K562 (cell line): ENCODE measurements at regions of chr1 and their contacts with region 1.

Region 1: GRCh38 chr1:55064071-55064581 is 24.8 kb downstream of the PCSK9 start:
- DNase-seq: no peak
- ATAC-seq: peak; percentile 16; the same call in 2 of the 3 replicates
- H3K4me3 ChIP-seq: no peak overlapping the region
- H3K27ac ChIP-seq: no peak overlapping the region
- H3K4me1 ChIP-seq: peaks cover 0 to 8% of the 10 kb centered on the region in 2 experiments; a peak in 2 of 5 replicates
- H3K27me3 ChIP-seq: no peaks in the 10 kb centered on the region
- CTCF ChIP-seq: no peak
- EP300 ChIP-seq: no peak
- POLR2A ChIP-seq: peak; percentile 10; the same call in 1 of the 2 replicates
- RAD21 ChIP-seq: no peak

Region 2: DNA sequence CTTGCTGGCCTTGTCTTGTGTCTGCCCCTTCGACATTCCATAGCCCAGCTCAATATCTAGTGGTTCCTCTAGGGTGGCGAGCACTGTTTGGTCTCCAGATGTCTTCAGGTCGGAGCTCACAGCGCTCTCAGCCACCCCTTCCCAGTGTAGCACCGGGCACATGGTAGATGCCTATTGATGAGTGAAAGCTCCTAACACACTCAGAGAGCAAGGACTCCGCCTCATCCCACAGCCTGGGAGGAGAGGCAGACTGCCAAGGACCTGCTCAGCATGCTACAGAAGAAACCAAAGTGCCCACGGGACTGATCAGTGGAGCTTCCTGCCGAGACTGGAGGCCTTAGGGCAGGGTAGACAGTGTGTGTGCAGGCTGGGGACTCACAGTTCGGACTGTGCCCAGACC is 13.8 kb before region 1 on chr1:
- CTCF ChIA-PET with region 1: no interaction called
- POLR2A ChIA-PET with region 1: interaction called, 24 read pairs
- in situ Hi-C with region 1: no loop called
- intact Hi-C with region 1: no loop called
- DNase-seq: no peak
- ATAC-seq: no peak
- H3K4me3 ChIP-seq: no peak overlapping the region
- H3K27ac ChIP-seq: no peak overlapping the region
- H3K4me1 ChIP-seq: peaks cover 0 to 5% of the 10 kb centered on the region in 2 experiments; a peak in 2 of 5 replicates
- H3K27me3 ChIP-seq: no peaks in the 10 kb centered on the region
- CTCF ChIP-seq: no peak
- EP300 ChIP-seq: no peak
- POLR2A ChIP-seq: no peak
- RAD21 ChIP-seq: no peak

Region 3: DNA sequence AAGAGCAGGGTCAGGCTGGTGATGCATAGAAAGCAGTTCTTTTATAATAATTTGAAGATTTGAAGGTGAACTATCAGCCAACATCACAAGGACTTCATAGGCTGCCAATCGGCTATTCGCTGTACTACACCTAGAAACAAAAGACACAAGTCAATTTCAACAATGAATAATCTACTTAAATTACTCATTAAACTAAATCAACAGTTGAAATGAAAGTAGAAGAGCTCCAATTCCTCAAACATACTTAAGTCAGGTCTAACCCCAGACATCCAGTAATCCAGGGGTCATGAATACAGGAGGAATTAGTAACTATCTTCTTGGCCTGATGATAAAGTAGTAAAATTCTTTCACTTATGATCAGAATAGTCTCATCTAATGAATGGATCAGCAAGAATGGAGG is 39.8 kb after region 1 on chr1:
- CTCF ChIA-PET with region 1: no interaction called
- POLR2A ChIA-PET with region 1: interaction called, 3 read pairs
- in situ Hi-C with region 1: loop called (anchors 5 kb)
- intact Hi-C with region 1: no loop called
- DNase-seq: no peak
- ATAC-seq: no peak
- H3K4me3 ChIP-seq: no peak overlapping the region
- H3K27ac ChIP-seq: no peak overlapping the region
- H3K4me1 ChIP-seq: no peaks in the 10 kb centered on the region
- H3K27me3 ChIP-seq: no peaks in the 10 kb centered on the region
- CTCF ChIP-seq: no peak
- EP300 ChIP-seq: no peak
- POLR2A ChIP-seq: no peak
- RAD21 ChIP-seq: no peak

Region 4: DNA sequence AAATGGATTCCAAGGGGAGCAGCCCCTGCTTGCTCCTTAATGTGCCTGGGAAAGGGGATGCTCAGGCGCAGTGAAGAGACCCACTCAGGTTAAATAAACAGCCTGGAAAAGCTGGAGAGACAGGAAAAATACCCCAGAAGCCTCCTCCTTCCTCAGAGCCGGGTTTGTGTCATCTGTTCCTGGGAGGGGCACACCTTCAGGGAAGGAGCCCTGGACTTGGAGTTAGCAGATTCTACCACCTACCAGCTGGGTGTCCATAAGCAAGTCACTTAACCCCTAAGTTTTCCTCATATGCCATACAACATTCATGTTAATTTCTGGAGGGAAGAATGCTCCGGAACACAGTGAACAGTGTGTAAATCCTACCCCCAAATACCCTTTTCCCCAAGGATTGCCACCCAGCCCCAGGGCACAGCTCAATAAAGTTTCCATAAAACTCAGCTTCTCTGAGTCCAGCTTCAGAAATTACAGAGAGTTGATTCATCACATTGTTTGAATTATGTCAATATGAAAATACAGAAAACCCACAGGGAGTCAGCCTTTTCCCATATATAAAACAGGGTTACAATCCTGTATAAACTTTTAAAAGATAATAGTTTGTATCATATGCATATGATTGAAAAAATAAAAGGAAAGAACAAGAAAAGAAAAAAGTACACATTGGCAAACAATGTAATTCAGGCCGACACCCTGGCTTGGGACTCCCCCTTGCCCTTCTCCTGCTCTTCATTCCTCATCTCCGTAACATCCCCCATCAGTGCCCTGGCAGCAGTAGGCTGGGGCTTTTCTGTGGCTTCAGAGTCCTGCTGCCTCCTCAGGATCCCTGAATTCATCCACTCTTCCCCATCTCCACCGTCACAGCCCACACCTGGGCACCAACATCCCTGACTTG is 442.8 kb after region 1 on chr1:
- CTCF ChIA-PET with region 1: no interaction called
- POLR2A ChIA-PET with region 1: no interaction called
- in situ Hi-C with region 1: no loop called
- intact Hi-C with region 1: no loop called
- DNase-seq: no peak
- ATAC-seq: no peak
- H3K4me3 ChIP-seq: no peak overlapping the region
- H3K27ac ChIP-seq: no peak overlapping the region
- H3K4me1 ChIP-seq: no peaks in the 10 kb centered on the region
- H3K27me3 ChIP-seq: peaks cover 0 to 11% of the 10 kb centered on the region in 2 experiments; a peak in 2 of 5 replicates
- CTCF ChIP-seq: no peak
- EP300 ChIP-seq: no peak
- POLR2A ChIP-seq: no peak
- RAD21 ChIP-seq: no peak